ENCODE measurements at regions of chr7 and their contacts with region 1.

Region 1: DNA sequence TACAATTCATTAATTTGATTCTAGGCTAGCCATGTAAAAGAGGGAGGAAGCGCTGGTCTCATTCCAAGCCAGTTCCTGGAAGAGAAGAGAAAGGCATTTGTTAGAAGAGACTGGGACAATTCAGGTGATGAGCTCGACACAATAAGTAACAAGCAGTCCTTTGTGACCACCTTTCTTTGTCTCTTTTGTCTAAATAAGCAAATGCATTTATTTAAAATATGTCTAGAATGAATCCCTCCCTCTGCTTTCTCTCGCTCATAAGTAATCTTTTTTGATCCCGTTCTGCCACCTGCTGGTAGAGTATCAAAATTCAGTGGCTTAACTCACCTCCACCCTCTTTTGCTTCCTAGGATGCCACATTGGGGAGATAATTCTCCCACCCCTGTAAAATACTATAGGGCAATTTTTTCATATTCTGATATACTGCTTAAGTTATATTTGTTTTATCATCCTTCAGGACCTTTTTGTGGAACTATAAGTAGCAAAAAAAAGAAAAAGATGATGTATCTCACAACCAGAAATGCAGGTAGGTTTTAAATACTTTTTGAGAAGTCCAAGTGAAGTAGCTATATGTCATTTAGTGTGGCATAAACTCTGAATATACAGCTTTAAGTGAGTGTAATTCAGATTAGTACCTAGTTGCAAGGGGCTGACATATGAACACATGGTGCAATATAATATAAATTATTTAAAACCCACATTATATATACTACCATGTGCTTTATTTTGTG is 91.5 kb downstream of the GSDME start:
- DNase-seq: peak; percentile 70
- H3K4me3 Mint-ChIP-seq: no peak overlapping the region
- H3K27ac Mint-ChIP-seq: no peak overlapping the region
- H3K4me1 Mint-ChIP-seq: peaks cover 7% of the 10 kb centered on the region
- H3K27me3 Mint-ChIP-seq: no peaks in the 10 kb centered on the region
- CTCF ChIP-seq: peak; percentile 80

Region 2: DNA sequence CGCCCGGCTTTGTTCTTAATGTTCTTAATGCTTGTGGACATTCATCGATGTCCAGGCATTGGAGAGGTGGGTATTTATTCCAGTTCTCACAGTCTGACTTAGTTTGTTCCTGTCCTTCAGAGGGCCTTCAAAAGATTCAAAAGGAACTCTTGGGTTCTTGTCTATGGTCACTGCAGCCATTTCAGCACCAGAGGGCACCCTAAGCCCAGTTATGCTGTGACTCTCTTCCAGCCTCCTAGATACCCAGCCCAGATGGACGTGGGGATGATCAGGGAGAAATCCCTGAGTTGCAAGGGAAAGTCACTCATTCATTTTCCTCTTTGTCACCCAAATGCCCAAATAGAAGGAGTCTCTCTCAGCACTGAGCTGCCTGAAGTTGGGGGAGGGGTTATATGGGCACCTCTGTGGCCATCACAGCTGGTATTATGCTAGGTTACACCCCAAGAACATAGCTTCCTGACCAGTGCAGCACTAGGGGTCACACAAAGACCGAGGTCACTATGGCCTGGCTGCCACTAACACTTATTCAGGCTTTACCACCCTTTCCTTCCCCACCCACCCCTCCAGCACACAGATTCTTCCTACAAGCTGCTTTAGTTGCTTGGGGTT is 1095.0 kb before region 1 on chr7:
- CTCF ChIA-PET with region 1: no interaction called
- intact Hi-C with region 1: loop called (anchors 5 kb)
- DNase-seq: peak; percentile 90
- H3K4me3 Mint-ChIP-seq: no peak overlapping the region
- H3K27ac Mint-ChIP-seq: no peak overlapping the region
- H3K4me1 Mint-ChIP-seq: no peaks in the 10 kb centered on the region
- H3K27me3 Mint-ChIP-seq: no peaks in the 10 kb centered on the region
- CTCF ChIP-seq: peak; percentile 96

Region 3: DNA sequence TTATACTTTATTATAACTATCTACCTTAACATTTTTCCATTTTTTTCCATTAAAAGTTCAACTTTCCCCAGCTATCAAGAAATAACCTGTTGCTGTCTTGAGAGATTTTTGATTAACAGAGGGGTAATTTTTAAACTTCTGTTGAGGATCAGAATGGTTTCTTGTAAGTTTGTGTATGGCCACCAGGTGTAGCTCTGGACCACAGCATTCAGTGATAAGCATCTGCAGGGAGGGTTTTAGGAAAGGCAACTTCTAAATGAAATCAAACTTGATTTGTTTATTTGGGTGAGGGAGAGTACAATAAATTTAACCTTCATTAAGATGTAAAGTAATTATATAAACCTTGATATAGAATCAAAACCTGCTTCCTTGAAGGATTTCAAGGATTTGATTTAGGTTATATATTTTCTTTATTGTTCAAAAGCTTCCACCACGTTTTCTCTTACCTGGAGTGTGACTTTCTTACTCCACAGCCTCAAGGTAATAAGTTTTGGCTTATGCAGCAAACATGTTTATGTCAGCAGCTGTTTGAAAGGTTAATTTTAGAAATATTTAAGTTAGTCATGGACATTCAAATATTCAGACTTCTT is 802.4 kb before region 1 on chr7:
- CTCF ChIA-PET with region 1: no interaction called
- intact Hi-C with region 1: loop called (anchors 5 kb)
- DNase-seq: peak; percentile 36
- H3K4me3 Mint-ChIP-seq: no peak overlapping the region
- H3K27ac Mint-ChIP-seq: no peak overlapping the region
- H3K4me1 Mint-ChIP-seq: peaks cover 13% of the 10 kb centered on the region
- H3K27me3 Mint-ChIP-seq: no peaks in the 10 kb centered on the region
- CTCF ChIP-seq: peak; percentile 75

Region 4: DNA sequence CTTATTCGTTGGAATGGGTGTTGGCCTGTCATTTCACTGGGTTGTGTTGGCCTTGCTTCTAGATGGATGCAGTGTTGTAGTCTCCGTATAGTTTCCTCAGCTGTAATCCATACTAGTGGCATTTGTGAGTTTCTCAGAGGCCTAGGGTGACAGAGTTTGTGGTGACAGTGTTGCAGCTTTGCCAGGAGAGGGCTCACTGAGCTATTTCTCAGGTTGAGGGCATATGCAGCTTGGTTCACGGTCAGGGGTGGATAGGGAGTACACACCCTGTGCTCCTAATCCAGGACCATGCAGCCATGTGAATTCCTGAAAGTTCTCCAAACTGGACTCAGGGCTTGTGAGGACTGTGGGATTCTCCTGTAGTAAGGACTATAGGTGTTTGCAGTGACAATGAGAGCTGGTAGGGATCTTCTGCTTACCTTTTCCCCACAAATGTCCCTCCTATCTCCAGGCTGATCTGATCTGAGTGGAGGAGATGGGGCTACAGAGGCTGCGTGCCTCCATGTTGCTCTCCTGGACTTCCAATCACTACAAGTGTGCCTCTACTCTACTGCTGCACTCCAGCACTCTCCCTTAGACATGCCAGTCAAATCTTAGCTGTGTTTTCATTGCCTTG is 726.7 kb before region 1 on chr7:
- CTCF ChIA-PET with region 1: no interaction called
- intact Hi-C with region 1: loop called (anchors 5 kb)
- DNase-seq: peak; percentile 74
- H3K4me3 Mint-ChIP-seq: no peak overlapping the region
- H3K27ac Mint-ChIP-seq: no peak overlapping the region
- H3K4me1 Mint-ChIP-seq: no peaks in the 10 kb centered on the region
- H3K27me3 Mint-ChIP-seq: peaks cover 64% of the 10 kb centered on the region
- CTCF ChIP-seq: peak; percentile 79

Region 5: GRCh38 chr7:24290004-24290641 is 375.6 kb before region 1 on chr7:
- CTCF ChIA-PET with region 1: no interaction called
- intact Hi-C with region 1: loop called (anchors 1 kb)
- DNase-seq: peak; percentile 59
- H3K4me3 Mint-ChIP-seq: no peak overlapping the region
- H3K27ac Mint-ChIP-seq: no peak overlapping the region
- H3K4me1 Mint-ChIP-seq: peaks cover 13% of the 10 kb centered on the region
- H3K27me3 Mint-ChIP-seq: peaks cover 48% of the 10 kb centered on the region
- CTCF ChIP-seq: peak; percentile 54

Region 6: GRCh38 chr7:24401628-24402593 is 263.8 kb before region 1 on chr7:
- CTCF ChIA-PET with region 1: no interaction called
- intact Hi-C with region 1: loop called (anchors 1 kb)
- DNase-seq: no peak
- H3K4me3 Mint-ChIP-seq: peak overlapping the region; percentile 4
- H3K27ac Mint-ChIP-seq: no peak overlapping the region
- H3K4me1 Mint-ChIP-seq: no peaks in the 10 kb centered on the region
- H3K27me3 Mint-ChIP-seq: peaks cover 48% of the 10 kb centered on the region
- CTCF ChIP-seq: peak; percentile 55

Region 7: GRCh38 chr7:24492571-24492970 is 173.2 kb before region 1 on chr7:
- CTCF ChIA-PET with region 1: no interaction called
- intact Hi-C with region 1: no loop called
- DNase-seq: no peak
- H3K4me3 Mint-ChIP-seq: no peak overlapping the region
- H3K27ac Mint-ChIP-seq: no peak overlapping the region
- H3K4me1 Mint-ChIP-seq: no peaks in the 10 kb centered on the region
- H3K27me3 Mint-ChIP-seq: peaks cover 61% of the 10 kb centered on the region
- CTCF ChIP-seq: no peak

Region 8: DNA sequence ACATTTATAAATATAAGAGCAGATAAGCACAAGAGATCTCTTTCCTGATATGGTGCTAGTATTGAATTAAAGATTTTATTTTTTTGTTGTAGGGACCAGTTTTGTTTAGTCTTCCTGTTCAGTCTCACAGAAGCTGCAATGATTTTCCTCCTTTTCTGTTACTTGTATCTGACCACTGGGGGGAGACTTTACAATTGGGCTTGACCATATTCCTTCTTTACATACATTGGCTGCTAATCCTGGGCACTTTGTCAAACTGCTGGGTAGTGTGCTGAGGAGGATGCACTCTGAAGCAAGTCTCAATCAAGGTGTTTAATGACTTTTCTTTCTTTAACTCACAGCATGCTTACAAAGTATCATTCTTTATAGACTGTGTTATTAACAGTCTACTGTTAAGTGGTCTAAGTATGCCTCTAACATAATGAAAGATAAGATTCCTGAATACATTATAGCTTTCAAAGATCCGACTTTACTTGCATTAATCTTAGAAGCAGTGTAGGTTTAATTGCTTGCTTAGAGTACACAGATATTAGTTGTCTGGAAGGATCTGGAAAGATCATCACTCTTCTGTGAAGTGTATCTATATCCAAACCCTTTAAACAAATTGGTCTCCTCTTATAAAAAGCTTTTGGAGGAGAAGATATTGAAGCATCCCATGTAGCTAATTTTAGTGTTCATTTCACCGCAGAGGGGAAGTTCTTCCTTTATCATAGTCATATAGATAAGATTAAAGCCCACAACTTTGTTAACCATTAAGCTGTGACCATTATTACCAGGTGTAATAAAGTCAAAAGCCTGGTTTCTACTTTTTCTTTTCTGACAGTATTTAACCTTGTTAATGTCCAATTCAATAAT is 89.3 kb before region 1 on chr7:
- CTCF ChIA-PET with region 1: interaction called, 3 read pairs
- intact Hi-C with region 1: loop called (anchors 1 kb)
- DNase-seq: peak; percentile 56
- H3K4me3 Mint-ChIP-seq: peak overlapping the region; percentile 6
- H3K27ac Mint-ChIP-seq: no peak overlapping the region
- H3K4me1 Mint-ChIP-seq: peaks cover 50% of the 10 kb centered on the region
- H3K27me3 Mint-ChIP-seq: peaks cover 10% of the 10 kb centered on the region
- CTCF ChIP-seq: peak; percentile 85